Brain microvascular endothelial cell (primary cell): ENCODE measurements at regions of chr18 and their contacts with region 1.

Region 1: DNA sequence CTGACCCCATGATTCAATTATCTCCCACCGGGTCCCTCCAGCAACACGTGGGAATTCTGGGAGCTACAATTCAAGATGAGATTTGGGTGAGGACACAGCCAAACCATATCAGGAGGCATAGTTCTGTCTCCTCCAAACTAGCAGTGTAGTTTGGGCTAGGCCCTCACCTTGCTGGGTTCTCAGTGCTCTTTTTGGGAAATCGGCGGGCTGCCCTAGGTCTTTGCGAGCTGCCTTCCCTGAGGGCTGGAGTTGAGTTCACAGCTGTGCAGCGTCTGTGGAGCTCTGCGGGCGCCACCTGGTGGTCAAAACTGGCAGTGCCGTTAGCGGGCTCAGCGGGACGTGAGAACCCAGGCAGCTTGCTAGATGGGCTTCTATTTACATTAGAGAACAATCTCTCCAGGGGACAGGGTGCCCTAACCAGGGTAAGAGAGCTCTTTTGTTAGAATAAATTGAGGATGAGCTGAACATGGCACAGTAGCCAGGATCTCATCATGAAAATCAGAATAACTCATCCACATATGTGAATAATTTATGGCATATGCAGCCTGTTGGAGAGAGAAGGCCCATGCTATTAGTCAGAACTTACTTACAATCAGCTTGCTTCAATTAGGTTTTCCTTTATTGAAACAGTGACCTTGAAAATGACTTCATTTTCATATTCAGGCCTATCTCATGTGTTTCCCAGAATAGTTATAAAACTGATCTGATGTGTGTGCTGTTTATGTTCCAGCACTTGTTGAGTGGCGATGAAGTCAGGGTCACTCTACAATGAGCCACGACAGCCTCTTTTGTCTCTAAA is 27.4 kb upstream of the YES1 start:
- DNase-seq: peak; percentile 84
- H3K4me3 ChIP-seq: no peak overlapping the region
- H3K27ac ChIP-seq: no peak overlapping the region
- H3K27me3 ChIP-seq: no peaks in the 10 kb centered on the region
- CTCF ChIP-seq: peak; percentile 99

Region 2: DNA sequence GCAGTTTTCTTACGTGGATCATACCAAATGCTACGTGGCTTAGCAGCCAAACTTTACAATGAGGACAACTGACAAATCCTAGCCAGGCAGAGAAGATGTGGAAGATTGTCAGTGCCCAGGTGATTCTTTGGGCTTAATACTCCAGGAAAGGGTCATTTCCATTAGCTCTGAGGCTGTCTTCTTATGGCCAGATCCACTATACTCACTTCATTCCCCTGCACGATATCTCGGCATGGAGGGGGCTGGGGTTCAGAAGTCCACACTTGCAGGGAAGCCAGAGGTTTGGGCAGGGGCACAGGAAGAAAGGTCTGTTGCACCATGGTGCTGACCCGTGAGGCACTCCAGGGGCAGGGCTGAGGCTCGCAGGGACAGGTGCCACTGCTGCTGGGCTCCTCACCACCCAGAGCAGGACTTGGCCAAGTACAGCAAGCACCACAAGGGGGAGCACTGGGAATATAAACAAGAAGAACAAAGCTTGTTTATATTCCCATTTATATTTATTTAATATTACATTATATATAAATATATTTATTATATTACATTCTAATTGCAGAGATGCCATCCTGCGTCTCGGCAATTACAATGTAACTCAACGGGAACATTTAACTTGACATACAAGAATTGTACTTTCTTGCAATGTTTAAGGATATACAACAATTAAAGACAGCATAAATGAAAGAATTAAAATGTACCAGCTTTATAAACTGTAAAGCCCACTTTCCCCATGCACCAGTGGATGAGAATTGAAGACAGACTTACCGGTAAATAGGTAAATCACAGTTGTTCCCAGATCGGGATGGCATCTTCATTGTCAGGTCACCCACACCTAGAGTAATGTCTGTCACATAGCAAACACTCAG is 215.4 kb before region 1 on chr18:
- in situ Hi-C with region 1: loop called (anchors 25 kb)
- DNase-seq: peak; percentile 76
- H3K4me3 ChIP-seq: no peak overlapping the region
- H3K27ac ChIP-seq: no peak overlapping the region
- H3K27me3 ChIP-seq: peaks cover 10% of the 10 kb centered on the region
- CTCF ChIP-seq: peak; percentile 88

Region 3: GRCh38 chr18:686339-687111 is 152.9 kb before region 1 on chr18:
- in situ Hi-C with region 1: no loop called
- DNase-seq: no peak
- H3K4me3 ChIP-seq: no peak overlapping the region
- H3K27ac ChIP-seq: no peak overlapping the region
- H3K27me3 ChIP-seq: no peaks in the 10 kb centered on the region
- CTCF ChIP-seq: peak; percentile 21

Region 4: GRCh38 chr18:741931-742512 is 97.4 kb before region 1 on chr18:
- in situ Hi-C with region 1: loop called (anchors 25 kb)
- DNase-seq: peak; percentile 11
- H3K4me3 ChIP-seq: no peak overlapping the region
- H3K27ac ChIP-seq: no peak overlapping the region
- H3K27me3 ChIP-seq: no peaks in the 10 kb centered on the region
- CTCF ChIP-seq: peak; percentile 45

Region 5: DNA sequence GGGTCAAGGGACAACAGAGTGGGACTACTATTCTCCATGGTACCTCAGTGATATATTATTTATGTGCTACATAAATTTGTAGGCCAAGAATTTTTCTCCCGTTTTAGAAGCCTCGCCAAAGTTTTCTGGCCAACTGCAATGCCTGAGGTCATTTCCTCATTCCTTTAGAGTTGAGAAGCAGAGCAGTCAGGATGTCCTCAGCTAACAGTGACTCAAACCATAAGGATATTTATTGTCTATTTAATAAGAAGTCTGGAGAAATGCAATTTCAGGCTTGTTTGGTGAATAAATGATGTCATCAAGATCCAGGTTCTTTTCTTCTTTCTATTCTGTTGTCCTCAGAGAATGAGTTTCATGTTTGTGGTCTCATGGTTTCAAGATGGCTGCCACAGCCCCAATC is 156.2 kb after region 1 on chr18:
- in situ Hi-C with region 1: no loop called
- DNase-seq: peak; percentile 11
- H3K4me3 ChIP-seq: no peak overlapping the region
- H3K27ac ChIP-seq: peak overlapping the region; percentile 55
- H3K27me3 ChIP-seq: no peaks in the 10 kb centered on the region
- CTCF ChIP-seq: no peak